Left ventricle myocardium superior (tissue), 1 donor: ENCODE measurements at regions of chr10 and their contacts with region 1.

Region 1: GRCh38 chr10:119207367-119207668 is at the start of gene GRK5:
- DNase-seq: peak; percentile 98
- ATAC-seq: peak; percentile 93
- total RNA-seq, gene GRK5: 43.4 TPM

Region 2: DNA sequence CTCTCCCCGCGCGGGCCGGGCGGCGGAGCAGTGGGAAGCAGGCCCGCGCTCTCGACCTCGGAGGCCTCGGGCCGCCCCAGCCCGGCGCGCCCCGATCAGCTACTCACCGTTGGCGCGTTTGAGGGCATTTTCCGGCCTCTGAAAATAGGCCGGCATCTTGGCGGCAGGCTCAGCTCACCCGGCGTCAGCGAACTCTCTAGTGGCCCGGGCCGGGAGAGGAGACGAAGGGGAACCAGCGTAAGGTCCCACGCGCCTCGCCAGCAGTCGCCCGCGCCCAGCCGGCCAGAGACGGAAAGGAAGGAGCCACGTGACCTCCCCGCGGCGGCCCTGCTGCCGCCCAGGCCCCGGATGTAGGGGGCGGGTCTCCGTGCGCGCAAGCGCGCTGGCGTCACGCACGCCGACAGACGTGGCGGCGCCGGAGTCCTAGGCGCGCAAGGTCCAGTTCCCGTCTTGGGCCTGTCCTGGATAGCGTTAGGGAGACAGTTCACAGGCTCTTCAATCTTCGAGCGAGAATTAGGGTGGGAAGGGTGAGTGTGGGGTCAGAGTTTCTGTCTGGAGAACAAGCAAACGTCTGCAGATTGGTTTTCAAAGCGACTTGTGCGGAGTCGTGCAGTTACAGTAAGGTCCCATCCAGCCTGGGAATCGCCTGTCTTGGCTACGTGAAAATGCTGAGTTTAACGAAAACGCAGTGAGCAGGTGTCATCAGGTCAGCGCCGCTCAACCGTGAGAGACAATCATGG is 126.6 kb before region 1 on chr10 and contains the start of gene EIF3A:
- intact Hi-C with region 1: no loop called
- DNase-seq: peak; percentile 96
- ATAC-seq: peak; percentile 98
- total RNA-seq, gene EIF3A: 106 TPM

Region 3: GRCh38 chr10:119090968-119091367 is 116.3 kb before region 1 on chr10:
- intact Hi-C with region 1: no loop called
- DNase-seq: no peak
- ATAC-seq: no peak

Region 4: GRCh38 chr10:119416855-119417254 is 209.5 kb after region 1 on chr10:
- intact Hi-C with region 1: loop called (anchors 10 kb)
- DNase-seq: peak; percentile 84
- ATAC-seq: peak; percentile 20

Region 5: DNA sequence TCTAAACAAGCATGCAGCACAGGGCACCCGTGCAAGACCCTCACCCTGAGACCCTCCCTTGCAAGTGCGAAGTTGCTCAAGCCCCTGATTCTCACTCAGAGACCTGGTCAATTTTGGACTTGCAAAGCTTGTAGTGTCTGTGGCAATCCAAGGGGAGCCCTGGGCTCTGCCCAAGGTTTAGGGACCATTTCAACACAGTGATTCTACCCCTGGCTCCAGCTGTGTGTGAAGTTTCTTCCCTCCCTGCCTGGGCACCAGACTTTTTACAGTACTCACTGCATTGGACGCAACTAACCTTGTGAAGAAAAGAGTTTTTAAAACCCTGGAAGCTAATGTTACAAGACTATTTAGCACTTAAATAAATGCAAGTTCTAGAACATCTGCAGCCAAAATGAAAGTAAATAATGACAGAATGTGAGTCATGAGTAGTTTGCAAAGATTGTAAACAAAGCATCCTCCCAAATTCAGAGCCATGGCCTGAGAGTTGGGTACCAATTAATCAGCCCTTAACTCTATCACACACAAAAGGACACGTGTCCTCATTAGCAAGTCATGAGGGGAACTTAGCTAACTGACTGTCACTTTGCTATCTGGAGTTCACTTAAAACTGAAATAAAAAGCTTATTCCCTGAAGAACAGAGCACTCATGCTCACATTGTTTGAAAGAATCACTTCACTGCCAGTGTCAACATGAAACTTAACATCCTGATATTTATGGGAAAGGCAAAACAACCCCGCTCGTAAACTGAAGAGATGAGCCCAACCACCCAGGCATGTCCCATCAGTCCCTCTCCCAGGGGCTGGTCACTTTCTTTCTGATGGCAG is 287.1 kb after region 1 on chr10:
- intact Hi-C with region 1: loop called (anchors 5 kb)
- DNase-seq: no peak
- ATAC-seq: no peak